WTC11 (cell line): ENCODE measurements at regions of chr3 and their contacts with region 1.

Region 1: DNA sequence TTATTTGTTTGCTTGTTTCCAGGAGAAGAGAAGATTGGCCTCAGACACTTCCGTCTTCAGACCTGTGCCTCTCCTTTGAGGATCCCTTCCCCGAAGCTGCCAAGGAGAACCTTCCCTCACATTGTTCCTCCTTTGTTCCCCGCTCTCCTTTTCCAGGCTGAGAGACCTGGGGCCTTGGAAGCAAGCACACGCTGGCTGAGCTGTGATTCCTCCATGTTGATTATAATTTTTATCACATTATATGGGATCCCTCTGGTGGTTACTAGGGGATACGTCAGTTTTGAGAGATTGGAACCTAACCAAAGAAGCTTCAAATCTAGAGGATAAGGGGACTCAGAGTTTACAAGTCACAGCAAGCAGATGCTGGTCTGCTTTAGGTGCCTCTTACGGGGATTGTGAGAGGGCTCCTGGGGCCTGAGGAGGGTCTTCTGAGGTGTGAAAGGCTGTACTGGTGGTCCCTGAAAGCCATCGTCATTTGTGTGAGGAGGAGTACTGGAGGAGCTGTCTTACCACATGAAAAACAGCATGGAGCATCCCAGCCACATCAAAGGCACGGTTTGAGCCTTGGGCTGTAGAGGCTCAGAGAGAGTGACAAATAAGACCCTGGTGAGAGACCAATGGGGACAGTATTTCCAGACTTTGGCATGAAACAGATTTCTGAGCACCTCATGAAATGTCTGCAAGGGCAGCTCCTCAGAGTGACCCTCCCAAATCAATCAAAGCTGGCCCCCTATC is 760.1 kb upstream of the CFAP20DC start:
- DNase-seq: no peak
- ATAC-seq: peak; percentile 55
- H3K4me3 Mint-ChIP-seq: no peak overlapping the region
- H3K27ac Mint-ChIP-seq: no peak overlapping the region
- H3K4me1 Mint-ChIP-seq: peaks cover 49% of the 10 kb centered on the region
- H3K27me3 Mint-ChIP-seq: peaks cover 66% of the 10 kb centered on the region
- CTCF ChIP-seq: no peak; the same call in 1 of the 2 replicates

Region 2: GRCh38 chr3:59185586-59186369 is 624.1 kb before region 1 on chr3:
- CTCF ChIA-PET with region 1: no interaction called
- POLR2A ChIA-PET with region 1: no interaction called
- DNase-seq: no peak
- ATAC-seq: peak; percentile 41; the same call in 1 of the 2 replicates
- H3K4me3 Mint-ChIP-seq: no peak overlapping the region; the same call in 1 of the 2 replicates
- H3K27ac Mint-ChIP-seq: no peak overlapping the region
- H3K4me1 Mint-ChIP-seq: peaks cover 45% of the 10 kb centered on the region
- H3K27me3 Mint-ChIP-seq: no peaks in the 10 kb centered on the region
- CTCF ChIP-seq: no peak

Region 3: DNA sequence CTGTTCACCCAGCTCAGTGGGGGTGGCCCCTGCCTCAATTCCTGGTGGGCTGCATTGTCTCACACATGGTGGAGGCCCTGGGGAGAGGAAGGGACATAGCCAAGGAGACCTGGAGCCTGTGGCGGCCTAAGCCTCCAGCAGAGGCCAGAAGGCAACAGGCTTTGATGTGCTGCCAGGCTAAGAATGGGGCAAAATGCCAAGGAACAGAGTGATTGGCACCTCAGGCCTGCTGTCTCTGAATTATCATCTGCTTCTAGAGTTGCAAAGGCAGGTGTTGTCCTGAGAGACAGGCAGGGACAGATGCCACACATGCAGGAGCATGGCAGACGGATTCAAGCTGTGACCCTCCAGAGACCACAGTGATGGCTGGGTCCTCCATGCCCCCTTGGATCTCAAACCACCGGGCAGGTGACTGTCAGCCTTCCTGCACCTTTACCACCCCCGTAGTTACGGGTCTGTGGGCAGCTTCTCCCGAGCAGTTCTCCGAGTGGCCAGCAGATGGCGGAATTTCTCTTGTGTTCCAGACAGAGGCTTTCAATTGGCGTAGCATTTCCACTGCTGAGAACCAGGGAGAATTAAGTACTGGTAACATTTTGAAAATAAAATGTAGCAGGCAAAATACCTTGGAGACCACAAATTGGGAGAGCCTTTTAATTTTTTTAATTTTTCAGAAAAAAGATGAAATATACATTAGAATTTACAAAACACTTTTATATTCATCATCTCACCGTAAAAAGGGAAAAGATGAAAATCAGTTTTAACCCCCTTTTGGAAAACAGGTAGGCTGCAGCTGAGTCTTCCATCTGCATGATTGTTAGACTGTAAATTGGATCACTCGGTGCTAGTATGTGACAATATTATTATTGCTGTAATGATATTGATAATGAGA is 234.5 kb before region 1 on chr3:
- CTCF ChIA-PET with region 1: interaction called, 15 read pairs
- POLR2A ChIA-PET with region 1: no interaction called
- DNase-seq: peak; percentile 92
- ATAC-seq: peak; percentile 90
- H3K4me3 Mint-ChIP-seq: no peak overlapping the region
- H3K27ac Mint-ChIP-seq: no peak overlapping the region
- H3K4me1 Mint-ChIP-seq: no peaks in the 10 kb centered on the region
- H3K27me3 Mint-ChIP-seq: no peaks in the 10 kb centered on the region
- CTCF ChIP-seq: peak; percentile 90

Region 4: DNA sequence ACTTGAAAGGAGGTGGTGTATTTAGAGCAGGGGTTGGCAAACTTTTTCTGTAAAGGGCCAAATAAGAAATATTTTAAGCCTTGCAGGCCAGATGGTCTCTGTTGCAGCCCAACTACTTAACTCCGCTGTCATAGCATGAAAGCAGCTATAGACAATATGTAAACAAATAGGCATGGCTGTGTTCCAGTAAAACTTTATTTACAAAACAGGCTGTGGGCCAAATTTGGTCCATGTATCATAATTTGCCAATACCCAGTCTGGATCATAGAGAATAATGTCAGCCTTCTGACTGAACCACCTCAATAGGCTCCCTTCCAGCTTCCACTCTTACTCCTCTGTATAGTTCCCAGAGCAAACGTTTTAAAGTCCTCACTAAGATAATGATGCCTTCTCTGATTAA is 121.2 kb before region 1 on chr3:
- CTCF ChIA-PET with region 1: no interaction called
- POLR2A ChIA-PET with region 1: no interaction called
- DNase-seq: no peak
- ATAC-seq: no peak
- H3K4me3 Mint-ChIP-seq: no peak overlapping the region
- H3K27ac Mint-ChIP-seq: no peak overlapping the region
- H3K4me1 Mint-ChIP-seq: no peaks in the 10 kb centered on the region
- H3K27me3 Mint-ChIP-seq: no peaks in the 10 kb centered on the region
- CTCF ChIP-seq: no peak

Region 5: DNA sequence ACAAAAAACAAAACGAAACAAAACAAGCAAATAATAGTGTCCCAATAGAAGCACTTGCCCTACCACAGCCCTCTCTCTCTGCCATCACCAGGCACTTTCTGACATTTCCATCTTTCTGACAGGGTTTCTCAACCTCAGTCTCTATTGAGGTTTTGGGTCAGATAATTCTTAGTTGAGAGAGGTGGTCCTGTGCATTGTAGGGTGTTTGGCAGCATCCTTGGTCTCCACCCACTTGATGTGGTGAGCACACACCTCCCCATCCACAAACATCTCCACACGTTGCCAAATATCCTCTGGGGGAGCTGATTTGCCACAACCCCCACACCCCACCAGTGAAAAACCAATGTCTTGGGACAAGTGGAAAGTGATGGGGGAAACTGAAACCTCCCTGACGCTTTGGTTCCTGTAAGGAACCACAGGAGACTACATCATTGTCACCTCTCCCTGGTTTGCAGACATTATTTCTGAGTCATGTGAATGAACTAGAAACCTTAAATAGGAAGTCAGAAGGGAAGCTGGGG is 26.3 kb before region 1 on chr3:
- CTCF ChIA-PET with region 1: no interaction called
- POLR2A ChIA-PET with region 1: no interaction called
- DNase-seq: no peak
- ATAC-seq: no peak
- H3K4me3 Mint-ChIP-seq: no peak overlapping the region
- H3K27ac Mint-ChIP-seq: no peak overlapping the region
- H3K4me1 Mint-ChIP-seq: peaks cover 20% of the 10 kb centered on the region
- H3K27me3 Mint-ChIP-seq: no peaks in the 10 kb centered on the region
- CTCF ChIP-seq: no peak

Region 6: DNA sequence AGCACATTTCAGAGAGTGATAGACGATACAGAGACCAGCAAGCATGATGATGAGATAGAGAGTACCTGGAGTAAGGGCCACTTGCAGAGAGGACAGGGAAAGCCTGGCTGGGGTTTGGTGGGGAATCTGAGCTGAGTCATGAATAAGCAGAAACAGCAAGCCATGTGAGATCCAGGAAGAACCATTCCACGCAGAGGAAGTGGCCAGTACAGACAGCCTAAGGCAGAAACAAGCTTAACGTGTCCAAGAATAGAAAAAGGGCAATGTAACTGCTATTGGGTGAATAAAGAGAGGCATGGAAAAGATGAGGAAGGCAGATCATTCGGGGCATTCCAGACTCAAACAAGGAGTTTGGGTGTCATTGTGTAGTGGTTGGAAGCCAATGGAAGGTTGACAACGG is 56.2 kb after region 1 on chr3:
- CTCF ChIA-PET with region 1: no interaction called
- POLR2A ChIA-PET with region 1: no interaction called
- DNase-seq: no peak
- ATAC-seq: no peak
- H3K4me3 Mint-ChIP-seq: no peak overlapping the region
- H3K27ac Mint-ChIP-seq: no peak overlapping the region
- H3K4me1 Mint-ChIP-seq: no peaks in the 10 kb centered on the region
- H3K27me3 Mint-ChIP-seq: no peaks in the 10 kb centered on the region
- CTCF ChIP-seq: no peak